Activated naive CD4-positive, alpha-beta T cell treated with anti-CD3 and anti-CD28 coated beads for 36 hours (primary cell): ENCODE measurements at regions of chr4 and their contacts with region 1.

Region 1: DNA sequence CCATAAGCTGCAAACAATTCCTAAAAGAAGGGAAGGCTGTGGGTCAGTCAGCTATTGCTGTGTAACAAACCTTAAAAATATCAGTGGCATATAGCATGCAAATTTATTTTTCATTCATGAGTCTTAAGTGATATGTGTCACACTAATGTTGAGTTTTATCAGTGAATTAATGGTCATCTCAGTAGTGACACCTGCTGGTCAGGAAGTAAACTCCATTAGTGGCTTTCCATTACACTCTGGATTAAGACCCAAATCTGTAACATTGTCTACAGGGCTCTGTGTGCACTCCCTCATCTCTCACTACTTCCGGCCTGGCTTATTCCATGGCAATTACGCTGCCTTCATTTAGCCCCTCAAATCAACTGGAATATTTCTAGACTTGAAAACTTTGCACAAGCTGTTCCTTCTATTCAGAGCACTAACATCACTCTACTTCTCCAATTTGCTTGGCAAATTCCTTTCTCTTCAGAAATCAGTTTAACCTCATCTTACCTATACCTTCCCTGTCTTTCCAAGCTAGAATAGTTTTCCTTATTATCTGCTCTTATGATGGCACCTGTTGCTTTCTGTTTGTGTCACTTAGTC is 217.3 kb upstream of the TAPT1 start:
- DNase-seq: no peak
- H3K4me3 Mint-ChIP-seq: no peak overlapping the region
- H3K27ac Mint-ChIP-seq: no peak overlapping the region
- H3K4me1 Mint-ChIP-seq: no peaks in the 10 kb centered on the region
- H3K27me3 Mint-ChIP-seq: peaks cover 7% of the 10 kb centered on the region

Region 2: DNA sequence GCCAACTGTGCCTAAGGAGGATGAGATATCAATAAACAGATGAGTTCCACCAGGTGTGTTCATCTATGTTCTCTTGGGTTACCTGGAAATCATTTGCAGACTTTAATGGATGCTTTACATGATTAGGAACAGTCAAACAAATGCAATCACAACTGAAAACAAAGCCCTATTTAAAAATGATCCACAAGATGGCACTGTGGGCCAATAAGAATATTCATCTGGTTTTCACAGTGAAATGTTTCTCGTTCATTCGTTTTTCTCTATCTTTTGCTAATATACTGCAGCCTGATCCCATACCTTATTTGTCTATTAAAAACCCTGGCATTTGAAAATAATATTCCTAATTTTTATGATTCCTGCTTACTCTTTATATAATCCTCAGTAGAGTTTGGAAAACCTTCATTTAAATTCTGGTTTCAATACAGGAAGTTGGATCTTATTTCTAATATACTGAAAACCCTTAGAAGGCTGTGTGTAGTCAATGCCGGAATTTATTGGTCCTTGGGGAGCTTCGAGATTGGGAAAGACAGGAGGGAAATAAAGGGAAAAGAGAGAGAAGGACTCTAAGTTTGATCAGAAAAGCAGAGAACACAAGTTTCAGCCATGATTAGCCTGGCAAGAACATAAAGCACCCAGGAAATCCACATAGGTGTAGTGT is 153.6 kb before region 1 on chr4:
- CTCF ChIA-PET with region 1: interaction called, 20 read pairs
- intact Hi-C with region 1: loop called (anchors 1 kb)
- DNase-seq: peak; percentile 7
- H3K4me3 Mint-ChIP-seq: no peak overlapping the region
- H3K27ac Mint-ChIP-seq: no peak overlapping the region
- H3K4me1 Mint-ChIP-seq: peaks cover 5% of the 10 kb centered on the region
- H3K27me3 Mint-ChIP-seq: peaks cover 16% of the 10 kb centered on the region